ENCODE measurements at regions of chr15 and their contacts with region 1.

Region 1: DNA sequence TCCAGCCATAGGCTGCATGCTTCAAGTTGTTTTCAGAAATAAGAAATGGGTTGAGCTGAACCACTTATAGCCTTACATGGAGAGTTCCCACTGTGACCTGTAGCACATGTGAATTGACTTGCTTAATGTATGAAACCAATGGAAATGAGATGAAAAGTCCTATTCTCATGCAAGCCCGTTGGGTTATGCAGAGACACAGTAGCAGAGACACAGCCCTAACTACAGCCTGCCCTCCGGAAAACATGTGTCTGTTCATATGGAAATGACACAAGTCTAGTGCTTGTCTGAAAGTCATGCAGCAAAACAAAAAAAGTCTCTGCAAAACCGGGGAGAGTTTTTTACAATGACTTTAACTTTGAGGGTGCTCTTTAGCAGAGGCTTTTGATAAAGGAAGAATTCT is 14.4 kb downstream of the HIGD2B start:
- DNase-seq: no peak
- ATAC-seq: no peak
- H3K4me3 ChIP-seq: no peak overlapping the region
- H3K27ac ChIP-seq: no peak overlapping the region
- H3K4me1 ChIP-seq: 0 out of 2 replicates have a peak, but pooled peaks cover 3% of the 10 kb centered on the region
- H3K27me3 ChIP-seq: no peaks in the 10 kb centered on the region
- CTCF ChIP-seq: no peak
- EP300 ChIP-seq: no peak
- POLR2A ChIP-seq: no peak
- RAD21 ChIP-seq: no peak

Region 2: GRCh38 chr15:72312605-72313447 is 358.7 kb before region 1 on chr15:
- CTCF ChIA-PET with region 1: interaction called, 7 read pairs
- POLR2A ChIA-PET with region 1: no interaction called
- RAD21 ChIA-PET with region 1: interaction called, 3 read pairs
- SMC1A ChIA-PET with region 1: no interaction called
- in situ Hi-C with region 1: loop called (anchors 5 kb)
- intact Hi-C with region 1: no loop called
- DNase-seq: no peak
- ATAC-seq: peak; percentile 100
- H3K4me3 ChIP-seq: no peak overlapping the region
- H3K27ac ChIP-seq: no peak overlapping the region
- H3K4me1 ChIP-seq: no peaks in the 10 kb centered on the region
- H3K27me3 ChIP-seq: no peaks in the 10 kb centered on the region
- CTCF ChIP-seq: peak; percentile 81 to 89 (median 84)
- EP300 ChIP-seq: no peak
- POLR2A ChIP-seq: no peak
- RAD21 ChIP-seq: peak; percentile 85

Region 3: DNA sequence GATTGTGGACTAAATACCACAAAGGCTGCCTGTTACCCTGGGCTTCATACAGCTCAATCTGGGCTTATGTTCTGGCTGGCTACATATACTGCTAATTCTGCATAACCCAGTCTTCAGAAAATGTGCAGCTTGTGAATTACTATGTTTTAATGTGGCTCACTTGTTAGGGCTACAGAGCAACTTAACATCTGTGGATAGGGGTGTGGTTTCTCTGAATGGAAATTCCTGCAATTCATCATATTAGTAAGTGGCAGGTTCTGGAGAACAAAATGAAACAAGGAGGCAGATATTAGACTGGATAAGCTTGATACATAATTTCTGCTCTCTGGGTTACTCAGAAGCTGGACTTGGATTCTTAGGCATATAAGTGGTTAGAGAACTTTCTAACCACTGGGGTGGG is 266.7 kb before region 1 on chr15:
- CTCF ChIA-PET with region 1: no interaction called
- POLR2A ChIA-PET with region 1: no interaction called
- RAD21 ChIA-PET with region 1: no interaction called
- SMC1A ChIA-PET with region 1: no interaction called
- in situ Hi-C with region 1: loop called (anchors 10 kb)
- intact Hi-C with region 1: no loop called
- DNase-seq: no peak
- ATAC-seq: no peak
- H3K4me3 ChIP-seq: no peak overlapping the region
- H3K27ac ChIP-seq: no peak overlapping the region
- H3K4me1 ChIP-seq: no peaks in the 10 kb centered on the region
- H3K27me3 ChIP-seq: peaks cover 2 to 3% of the 10 kb centered on the region in 2 experiments; a peak in 3 of 4 replicates
- CTCF ChIP-seq: no peak
- EP300 ChIP-seq: no peak
- POLR2A ChIP-seq: no peak
- RAD21 ChIP-seq: no peak

Region 4: DNA sequence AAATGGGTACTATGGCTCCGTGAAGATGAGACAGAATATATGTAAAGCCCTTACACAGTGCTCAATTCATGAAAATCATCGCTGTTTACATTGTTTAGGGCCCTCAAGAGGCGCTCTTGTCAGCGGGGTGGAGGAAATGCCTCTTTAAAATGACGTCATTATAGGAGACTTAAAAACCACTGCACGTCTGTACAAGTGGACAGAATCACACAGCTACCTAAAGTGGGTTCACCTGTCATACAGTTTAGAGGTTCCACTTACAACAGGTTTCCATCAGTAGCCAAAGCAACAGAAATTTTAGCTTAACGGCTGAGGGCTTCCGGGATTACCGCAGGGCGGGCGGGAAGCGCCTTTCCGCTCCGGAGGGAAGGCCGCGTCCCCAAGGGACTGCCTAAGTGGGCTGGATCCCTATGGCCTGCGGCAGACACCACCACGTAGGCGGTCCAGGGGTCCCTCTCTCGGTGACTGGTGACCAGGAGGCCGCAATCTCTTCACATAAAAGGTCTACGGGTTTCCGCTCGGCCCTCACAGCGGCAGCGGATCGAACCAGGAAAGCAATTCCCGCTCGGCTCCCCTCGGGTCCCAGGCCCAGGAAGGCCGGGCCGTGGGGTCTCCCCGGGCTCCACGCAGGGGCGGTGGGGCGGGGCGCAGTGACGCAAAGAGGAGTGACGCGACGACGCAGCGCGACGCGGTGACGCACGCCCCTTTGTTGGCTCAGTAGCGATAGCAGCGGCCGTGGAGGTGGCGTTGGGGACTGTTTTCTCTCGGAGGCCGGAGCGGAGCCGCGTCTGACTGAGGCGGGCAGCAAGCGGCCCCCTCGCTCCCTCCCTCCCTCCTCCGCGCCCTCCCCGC is 197.7 kb before region 1 on chr15 and contains the start of gene ARIH1:
- CTCF ChIA-PET with region 1: no interaction called
- POLR2A ChIA-PET with region 1: no interaction called
- RAD21 ChIA-PET with region 1: no interaction called
- SMC1A ChIA-PET with region 1: no interaction called
- in situ Hi-C with region 1: loop called (anchors 10 kb)
- intact Hi-C with region 1: no loop called
- DNase-seq: peak; percentile 80
- ATAC-seq: peak; percentile 91
- H3K4me3 ChIP-seq: peak within 1 kb of the TSS; percentile 91
- H3K27ac ChIP-seq: peak within 1 kb of the TSS; percentile 94
- H3K4me1 ChIP-seq: peaks cover 7% of the 10 kb centered on the region
- H3K27me3 ChIP-seq: no peaks in the 10 kb centered on the region
- CTCF ChIP-seq: peak; percentile 34 to 51 (median 43); a peak in 5 of 6 replicates
- EP300 ChIP-seq: peak in 1 of 2 experiments; percentile 63; a peak in 1 of 4 replicates
- POLR2A ChIP-seq: peak; percentile 97
- RAD21 ChIP-seq: peak; percentile 58
- polyA plus RNA-seq, gene ARIH1: 14.7 to 14.9 TPM

Region 5: DNA sequence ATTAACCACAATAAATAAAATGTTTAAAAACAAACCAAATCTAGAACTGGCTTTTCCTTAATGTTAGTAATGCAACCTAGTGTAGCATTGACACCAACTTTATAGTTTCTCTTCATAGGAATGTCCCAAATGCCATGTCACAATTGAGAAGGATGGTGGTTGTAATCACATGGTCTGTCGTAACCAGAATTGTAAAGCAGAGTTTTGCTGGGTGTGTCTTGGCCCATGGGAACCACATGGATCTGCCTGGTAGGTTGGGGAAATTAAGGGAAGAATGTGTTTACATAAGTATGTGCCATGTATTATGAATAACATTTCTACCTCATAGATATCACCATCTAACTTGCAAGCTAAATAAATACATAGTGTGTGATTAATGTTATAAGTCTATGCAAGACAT is 101.5 kb before region 1 on chr15:
- CTCF ChIA-PET with region 1: no interaction called
- POLR2A ChIA-PET with region 1: no interaction called
- RAD21 ChIA-PET with region 1: no interaction called
- SMC1A ChIA-PET with region 1: no interaction called
- in situ Hi-C with region 1: loop called (anchors 10 kb)
- intact Hi-C with region 1: no loop called
- DNase-seq: no peak
- ATAC-seq: no peak
- H3K4me3 ChIP-seq: no peak overlapping the region
- H3K27ac ChIP-seq: no peak overlapping the region
- H3K4me1 ChIP-seq: no peaks in the 10 kb centered on the region
- H3K27me3 ChIP-seq: no peaks in the 10 kb centered on the region
- CTCF ChIP-seq: no peak
- EP300 ChIP-seq: no peak
- POLR2A ChIP-seq: no peak
- RAD21 ChIP-seq: no peak

Region 6: GRCh38 chr15:72599855-72600464 is 71.6 kb before region 1 on chr15:
- CTCF ChIA-PET with region 1: interaction called, 27 read pairs
- POLR2A ChIA-PET with region 1: no interaction called
- RAD21 ChIA-PET with region 1: no interaction called
- SMC1A ChIA-PET with region 1: interaction called, 3 read pairs
- in situ Hi-C with region 1: no loop called
- intact Hi-C with region 1: no loop called
- DNase-seq: no peak
- ATAC-seq: peak; percentile 80
- H3K4me3 ChIP-seq: no peak overlapping the region
- H3K27ac ChIP-seq: no peak overlapping the region
- H3K4me1 ChIP-seq: no peaks in the 10 kb centered on the region
- H3K27me3 ChIP-seq: no peaks in the 10 kb centered on the region
- CTCF ChIP-seq: peak; percentile 50 to 62 (median 60)
- EP300 ChIP-seq: no peak
- POLR2A ChIP-seq: no peak
- RAD21 ChIP-seq: peak; percentile 56

Region 7: DNA sequence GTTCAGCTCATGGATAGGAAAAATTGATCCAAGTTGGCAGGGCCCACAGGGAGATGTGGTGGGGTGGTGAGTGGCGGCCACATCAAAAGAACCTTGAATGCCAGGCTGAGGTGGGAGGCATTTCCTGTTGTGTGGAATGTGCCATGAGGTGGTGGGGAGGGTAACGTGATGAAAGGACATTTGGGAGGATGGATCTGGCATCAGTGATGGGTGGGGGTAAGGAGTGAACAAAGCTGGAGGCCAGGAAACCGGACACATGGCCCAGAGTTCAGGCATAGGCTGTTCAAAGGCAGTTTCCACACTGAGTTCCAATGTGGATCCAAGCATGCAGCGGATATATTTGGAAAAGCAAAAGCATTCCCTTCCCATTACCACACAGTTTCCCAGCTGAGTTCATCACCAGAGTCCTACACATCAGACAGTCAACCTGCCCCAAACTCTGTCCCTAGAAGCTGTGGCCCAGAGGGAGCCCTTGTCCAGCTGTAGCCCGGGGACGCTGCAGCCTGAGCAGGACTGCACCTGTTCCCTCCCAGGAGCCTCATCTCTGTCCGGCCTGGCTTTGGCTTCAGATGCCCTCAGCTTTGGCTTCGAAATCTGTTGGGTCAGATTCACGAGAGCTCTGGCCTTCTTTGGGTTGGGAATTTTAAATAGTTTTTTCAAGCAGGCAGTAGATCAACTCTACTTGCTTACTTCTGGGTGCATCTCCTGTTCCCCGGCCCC is 54.9 kb before region 1 on chr15:
- CTCF ChIA-PET with region 1: no interaction called
- POLR2A ChIA-PET with region 1: no interaction called
- RAD21 ChIA-PET with region 1: no interaction called
- SMC1A ChIA-PET with region 1: no interaction called
- in situ Hi-C with region 1: no loop called
- intact Hi-C with region 1: no loop called
- DNase-seq: no peak
- ATAC-seq: no peak
- H3K4me3 ChIP-seq: no peak overlapping the region
- H3K27ac ChIP-seq: no peak overlapping the region
- H3K4me1 ChIP-seq: no peaks in the 10 kb centered on the region
- H3K27me3 ChIP-seq: no peaks in the 10 kb centered on the region
- CTCF ChIP-seq: no peak
- EP300 ChIP-seq: no peak
- POLR2A ChIP-seq: no peak
- RAD21 ChIP-seq: no peak

Region 8: GRCh38 chr15:72685925-72686794 is 14.6 kb after region 1 on chr15 and contains the starts of genes BBS4 and HIGD2B:
- CTCF ChIA-PET with region 1: interaction called, 10 read pairs
- POLR2A ChIA-PET with region 1: interaction called, 3 read pairs
- RAD21 ChIA-PET with region 1: no interaction called
- SMC1A ChIA-PET with region 1: no interaction called
- in situ Hi-C with region 1: no loop called
- intact Hi-C with region 1: no loop called
- DNase-seq: peak; percentile 70
- ATAC-seq: peak; percentile 99
- H3K4me3 ChIP-seq: peak within 1 kb of the TSS; percentile 84
- H3K27ac ChIP-seq: peak within 1 kb of the TSS; percentile 73
- H3K4me1 ChIP-seq: no peaks in the 10 kb centered on the region
- H3K27me3 ChIP-seq: no peaks in the 10 kb centered on the region
- CTCF ChIP-seq: no peak
- EP300 ChIP-seq: no peak
- POLR2A ChIP-seq: peak; percentile 88
- RAD21 ChIP-seq: no peak
- polyA plus RNA-seq, gene BBS4: 9.5 to 13.7 TPM
- polyA plus RNA-seq, gene HIGD2B: 0.10 TPM in 1 of 2 experiments, not detected in the other

Region 9: DNA sequence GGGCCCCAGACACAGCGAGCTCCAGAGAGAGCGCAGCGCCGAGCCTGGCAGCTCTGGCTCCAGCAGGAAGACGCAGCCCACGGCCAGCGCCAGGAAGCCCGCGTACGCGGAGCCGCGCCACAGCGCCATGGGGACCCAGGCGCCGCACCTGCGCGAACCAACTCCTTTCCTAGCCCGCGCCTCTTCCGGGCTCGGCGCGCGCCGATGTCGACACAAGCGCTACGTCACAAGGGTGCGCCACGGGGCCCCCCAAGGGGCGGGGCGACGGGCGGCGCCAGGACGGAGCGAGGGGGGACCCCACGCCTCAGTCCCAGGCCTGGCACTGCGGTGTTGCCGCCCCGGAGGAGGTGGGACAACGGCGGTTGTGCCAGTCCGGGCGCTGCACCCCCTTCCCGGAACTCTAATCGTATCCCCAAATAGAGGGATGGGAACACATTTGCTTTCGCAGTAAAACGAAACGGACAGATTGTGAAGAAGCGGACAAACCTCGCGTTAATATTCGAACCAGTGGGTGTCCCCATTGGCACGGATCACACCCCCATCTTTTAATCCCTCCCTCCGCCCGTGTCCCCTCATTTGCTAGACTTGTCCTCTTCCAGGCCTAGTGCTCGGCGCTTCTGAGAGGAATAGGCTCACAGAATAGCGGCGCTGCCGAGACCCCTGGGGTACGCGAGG is 112.2 kb after region 1 on chr15 and contains the start of gene ADPGK:
- CTCF ChIA-PET with region 1: no interaction called
- POLR2A ChIA-PET with region 1: no interaction called
- RAD21 ChIA-PET with region 1: no interaction called
- SMC1A ChIA-PET with region 1: no interaction called
- in situ Hi-C with region 1: no loop called
- intact Hi-C with region 1: no loop called
- DNase-seq: peak; percentile 70
- ATAC-seq: peak; percentile 86
- H3K4me3 ChIP-seq: peak within 1 kb of the TSS; percentile 94
- H3K27ac ChIP-seq: peak within 1 kb of the TSS; percentile 93
- H3K4me1 ChIP-seq: peaks cover 31% of the 10 kb centered on the region
- H3K27me3 ChIP-seq: no peaks in the 10 kb centered on the region
- CTCF ChIP-seq: 0 out of 6 replicates have a peak, but pooled peaks of 1 of the 3 experiments have one; percentile 0
- EP300 ChIP-seq: peak in 1 of 2 experiments; percentile 34; a peak in 1 of 4 replicates
- POLR2A ChIP-seq: peak; percentile 98
- RAD21 ChIP-seq: no peak
- polyA plus RNA-seq, gene ADPGK: 13.8 to 18.1 TPM

Measured in GM12878 (cell line).